Breast epithelium (tissue), 4 donors: ENCODE measurements at regions of chr10 and their contacts with region 1.

Region 1: DNA sequence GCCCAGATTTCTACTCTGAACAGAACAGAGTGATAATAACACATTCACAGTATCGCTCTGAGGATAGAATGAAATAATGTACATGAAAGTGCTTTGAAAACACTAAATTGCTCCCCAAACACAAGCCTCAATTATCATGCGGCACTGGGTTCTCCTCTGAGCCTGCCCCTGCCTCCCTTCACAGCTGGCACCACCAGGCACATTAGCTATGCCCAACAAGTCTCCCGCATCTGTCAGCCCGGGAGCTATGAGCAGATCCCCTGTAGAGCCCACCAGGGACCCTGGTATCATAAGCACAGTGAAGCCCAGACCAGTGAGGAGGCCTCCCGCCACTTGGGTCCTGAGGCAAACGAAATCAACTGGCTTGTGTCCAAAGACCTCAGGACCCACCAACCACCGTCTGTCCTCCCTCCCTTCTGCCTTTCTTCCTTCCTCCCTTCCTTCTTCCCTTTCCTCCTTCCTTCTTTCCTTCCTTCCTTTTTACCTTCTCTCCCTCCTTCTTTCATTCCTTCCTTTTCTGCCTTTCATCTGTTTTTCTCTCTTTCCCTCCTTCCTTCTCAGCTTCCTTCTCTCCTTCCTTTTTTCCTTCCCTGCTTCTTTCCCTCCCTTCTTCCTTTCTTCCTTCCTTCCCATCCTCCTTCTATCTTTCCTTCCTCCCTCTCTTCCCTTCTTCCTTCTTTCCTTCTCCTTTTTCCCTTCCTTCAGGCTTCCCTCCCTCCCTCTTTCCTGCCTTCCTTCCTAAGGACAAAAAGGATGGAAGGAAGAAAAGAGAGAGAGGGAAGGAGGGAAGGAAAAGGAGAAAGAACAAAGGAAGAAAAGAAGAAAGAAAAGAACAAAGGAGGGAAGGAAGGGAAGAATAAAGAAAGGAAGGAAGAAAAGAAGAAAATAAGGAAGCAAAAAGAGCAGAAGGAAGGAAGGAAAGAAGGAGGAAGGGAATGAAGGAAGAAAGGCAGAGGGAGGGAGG is 405.2 kb downstream of the GRID1 start:
- DNase-seq: no peak
- H3K4me3 ChIP-seq: no peak overlapping the region
- H3K27ac ChIP-seq: no peak overlapping the region
- H3K4me1 ChIP-seq: no peaks in the 10 kb centered on the region
- H3K27me3 ChIP-seq: no peaks in the 10 kb centered on the region
- CTCF ChIP-seq: no peak
- POLR2A ChIP-seq: no peak

Region 2: GRCh38 chr10:85741626-85742300 is 219.6 kb before region 1 on chr10:
- intact Hi-C with region 1: loop called (anchors 5 kb)
- DNase-seq: no peak
- H3K4me3 ChIP-seq: no peak overlapping the region
- H3K27ac ChIP-seq: no peak overlapping the region
- H3K4me1 ChIP-seq: no peaks in the 10 kb centered on the region
- H3K27me3 ChIP-seq: no peaks in the 10 kb centered on the region
- CTCF ChIP-seq: no peak
- POLR2A ChIP-seq: no peak

Region 3: DNA sequence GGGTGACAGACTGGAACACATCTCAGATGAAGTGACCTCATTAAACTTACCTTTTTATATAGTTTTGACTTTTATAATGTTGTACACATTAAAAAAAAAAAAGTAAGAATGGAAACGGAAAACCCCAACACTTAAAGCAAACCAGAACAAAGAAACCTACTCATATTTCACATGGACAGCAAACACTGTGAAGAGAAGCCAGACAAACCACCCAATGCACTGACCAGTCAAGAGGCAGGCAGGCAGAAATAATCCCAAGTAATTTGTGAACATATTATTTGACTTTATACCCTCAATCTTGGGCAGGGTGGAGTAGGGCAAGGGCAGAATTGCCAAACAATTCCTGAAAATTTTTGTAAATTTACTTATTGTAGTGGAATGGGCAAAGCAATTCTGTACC is 520.4 kb after region 1 on chr10:
- intact Hi-C with region 1: no loop called
- DNase-seq: no peak
- H3K4me3 ChIP-seq: no peak overlapping the region
- H3K27ac ChIP-seq: no peak overlapping the region
- H3K4me1 ChIP-seq: no peaks in the 10 kb centered on the region
- H3K27me3 ChIP-seq: no peaks in the 10 kb centered on the region
- CTCF ChIP-seq: no peak
- POLR2A ChIP-seq: no peak